Heart left ventricle (tissue), 16 donors: ENCODE measurements at regions of chr16 and their contacts with region 1.

Region 1: DNA sequence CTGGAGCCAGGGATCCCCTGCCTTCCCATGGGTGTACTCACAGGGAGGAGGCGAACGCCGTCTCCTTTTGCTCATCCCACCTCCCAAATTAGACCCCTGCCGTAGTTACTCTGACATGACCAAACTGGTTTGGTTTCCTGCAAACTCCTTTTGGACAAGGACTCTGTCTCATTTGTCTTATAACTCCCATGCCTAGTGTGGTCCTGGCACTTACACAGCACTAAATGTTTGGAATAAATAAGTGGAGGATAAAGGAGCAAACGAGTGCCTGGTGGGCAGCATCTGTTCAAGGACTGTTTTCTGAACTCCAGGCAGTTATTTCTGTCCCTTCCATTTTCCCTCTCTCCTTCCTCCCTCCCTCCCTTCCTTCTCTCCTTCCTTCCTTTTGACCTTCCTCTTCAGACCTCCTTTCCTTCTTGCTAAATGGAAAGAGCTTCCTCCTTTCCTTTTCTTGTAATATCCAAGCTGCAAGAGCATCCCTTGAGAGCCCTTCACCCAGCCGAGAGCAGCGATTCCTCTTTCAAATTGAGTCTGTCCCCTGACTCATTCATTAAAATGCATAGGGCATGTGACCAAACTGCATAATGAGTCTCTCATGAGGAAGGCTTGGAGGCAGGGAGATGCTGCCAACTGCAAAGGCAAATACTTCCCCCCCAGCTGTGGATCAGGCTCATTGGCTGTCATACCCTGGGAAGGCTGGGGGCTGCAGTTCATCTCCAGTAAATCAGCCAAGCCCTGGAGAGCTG is 36.8 kb downstream of the CHD9 start:
- DNase-seq: peak; percentile 73 to 85 (median 81)
- ATAC-seq: peak; percentile 24 to 54 (median 44)
- H3K4me3 ChIP-seq: peak overlapping the region in 3 of 12 donors; percentile 0 to 11 (median 7)
- H3K27ac ChIP-seq: peak overlapping the region; percentile 68 to 97 (median 88)
- H3K4me1 ChIP-seq: peaks cover 18 to 68% (median 57%) of the 10 kb centered on the region in 12 donors
- H3K27me3 ChIP-seq: no peaks in the 10 kb centered on the region
- CTCF ChIP-seq: no peak
- POLR2A ChIP-seq: no peak

Region 2: GRCh38 chr16:53065461-53066061 is 26.1 kb before region 1 on chr16:
- intact Hi-C with region 1: loop called in 2 of 10 experiments (anchors 2 kb)
- DNase-seq: peak in 2 of 5 donors; percentile 30 to 53
- ATAC-seq: peak; percentile 44 to 84 (median 76)
- H3K4me3 ChIP-seq: peak overlapping the region in 1 of 12 donors; percentile 1
- H3K27ac ChIP-seq: peak overlapping the region; percentile 39 to 82 (median 76)
- H3K4me1 ChIP-seq: peaks cover 5 to 90% (median 44%) of the 10 kb centered on the region in 12 donors
- H3K27me3 ChIP-seq: no peaks in the 10 kb centered on the region
- CTCF ChIP-seq: no peak
- POLR2A ChIP-seq: no peak